GM18951 (cell line): ENCODE measurements at regions of chr3 and their contacts with region 1.

Region 1: DNA sequence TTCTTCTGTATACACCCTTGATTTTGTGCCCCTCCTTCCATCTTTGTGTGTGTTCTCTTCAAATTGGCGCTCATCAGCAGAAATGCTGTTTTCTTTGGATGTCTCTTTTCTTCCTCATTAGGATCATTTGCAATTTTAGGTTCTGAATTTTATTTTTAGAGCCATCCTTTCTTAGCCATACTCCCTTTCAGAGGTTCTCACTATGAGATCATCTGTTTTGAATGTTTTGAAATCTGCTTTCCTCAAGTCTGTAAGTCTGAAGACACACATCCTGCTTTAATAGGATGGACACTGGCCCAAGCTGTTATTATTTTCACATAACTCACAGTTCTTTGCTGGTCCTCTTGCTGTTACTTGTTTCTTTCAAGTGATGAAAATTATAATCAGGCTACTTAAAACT is 124.8 kb downstream of the BDH1 start:
- POLR2A ChIP-seq: no peak

Region 2: DNA sequence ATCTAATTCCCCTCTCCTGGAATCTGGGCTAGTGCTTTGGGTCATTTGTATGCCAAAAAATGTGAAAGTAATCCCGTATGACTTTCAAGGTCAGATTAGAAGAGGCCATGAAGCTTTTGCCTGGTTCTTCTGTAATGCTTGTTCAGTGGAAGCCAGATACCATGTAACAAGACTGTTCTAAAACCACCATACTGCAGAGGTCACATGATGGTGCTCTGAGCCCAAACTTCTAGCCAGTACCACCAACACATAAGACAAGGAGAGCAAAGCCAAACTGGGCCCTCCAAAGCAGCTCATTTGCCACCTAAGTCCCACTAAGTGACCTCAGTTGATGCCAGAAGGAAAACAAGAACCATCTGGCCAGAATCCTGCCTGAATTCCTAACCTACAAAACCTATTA is 337.1 kb before region 1 on chr3:
- in situ Hi-C with region 1: no loop called
- POLR2A ChIP-seq: no peak

Region 3: DNA sequence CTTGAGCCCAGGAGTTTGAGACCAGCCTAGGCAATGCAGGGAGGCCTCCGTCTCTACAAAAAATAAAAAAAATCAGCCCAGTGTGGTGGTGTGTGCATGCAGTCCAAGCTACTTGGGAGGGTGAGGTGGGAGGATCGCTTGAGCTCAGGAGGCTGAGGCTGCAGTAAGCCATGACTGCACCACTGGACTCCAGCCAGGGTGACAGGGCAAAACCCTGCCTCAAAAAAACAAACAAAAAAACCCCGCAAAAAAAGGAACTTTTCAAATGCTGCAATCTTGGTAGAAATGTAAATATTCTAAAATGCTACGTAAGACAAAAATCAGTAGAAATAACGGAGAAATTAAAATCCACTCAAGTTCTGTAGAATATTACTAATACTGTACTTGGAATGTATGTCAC is 293.2 kb before region 1 on chr3:
- in situ Hi-C with region 1: no loop called
- POLR2A ChIP-seq: no peak

Region 4: DNA sequence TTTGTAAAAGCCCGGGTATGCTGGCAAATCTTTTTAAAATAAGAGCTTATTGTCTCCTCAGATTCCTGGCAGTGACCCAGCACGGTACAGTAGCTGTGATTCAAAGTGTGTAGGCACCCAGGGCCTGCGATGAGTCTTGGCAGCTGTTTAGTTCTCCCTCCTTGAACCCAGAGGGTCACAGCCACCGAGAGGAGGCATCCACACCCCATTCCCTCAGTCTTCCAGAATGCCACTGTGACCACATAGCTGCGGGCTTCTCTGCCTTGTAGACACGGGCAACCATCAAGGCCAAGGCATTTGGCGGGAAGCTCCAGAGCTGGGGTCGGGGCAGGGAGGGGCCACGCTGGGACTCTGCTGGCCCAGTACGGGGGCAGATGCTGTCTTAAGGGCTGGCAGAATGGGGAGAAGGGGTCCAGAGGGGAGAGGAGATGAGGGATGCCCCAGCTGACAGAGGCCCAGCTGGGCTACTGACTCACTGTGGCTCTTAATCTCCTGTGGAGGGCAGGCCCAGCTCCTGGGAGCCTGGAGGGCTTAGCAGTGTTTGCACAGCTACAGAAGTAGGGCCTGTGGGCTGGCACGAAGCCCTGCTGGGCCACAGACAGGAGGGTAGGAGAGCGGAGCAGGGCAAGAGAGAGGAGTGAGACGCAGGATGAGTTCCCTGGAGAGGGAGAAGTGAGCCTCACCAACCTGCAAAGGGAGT is 63.7 kb before region 1 on chr3:
- in situ Hi-C with region 1: loop called (anchors 10 kb)
- POLR2A ChIP-seq: no peak